Posterior vena cava (tissue), 2 donors: ENCODE measurements at regions of chr17 and their contacts with region 1.

Region 1: DNA sequence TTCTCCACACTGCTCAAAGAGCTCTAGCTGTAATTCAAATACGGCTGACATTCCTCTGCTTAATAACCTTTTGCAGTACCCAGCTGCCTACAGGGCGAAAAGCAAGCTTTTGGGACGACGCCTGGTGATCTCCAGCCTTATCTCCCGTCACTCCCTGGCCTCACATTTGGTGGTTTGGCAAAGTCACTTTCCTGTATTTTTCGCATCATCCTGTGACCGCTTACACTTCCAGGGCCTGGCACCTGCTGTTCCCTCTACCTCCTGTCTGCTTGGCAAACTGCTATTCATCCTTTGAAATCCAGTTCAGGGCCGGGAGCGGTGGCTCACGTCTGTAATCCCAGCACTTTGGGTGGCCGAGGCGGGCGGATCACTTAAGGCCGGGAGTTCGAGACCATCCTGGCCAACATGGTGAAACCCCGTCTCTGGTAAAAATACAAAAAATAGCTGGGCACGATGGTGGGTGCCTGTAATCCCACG is 2.7 kb upstream of the BHLHA9 start:
- DNase-seq: peak; percentile 83

Region 2: GRCh38 chr17:1078831-1079561 is 188.5 kb before region 1 on chr17:
- intact Hi-C with region 1: no loop called
- DNase-seq: no peak

Region 3: DNA sequence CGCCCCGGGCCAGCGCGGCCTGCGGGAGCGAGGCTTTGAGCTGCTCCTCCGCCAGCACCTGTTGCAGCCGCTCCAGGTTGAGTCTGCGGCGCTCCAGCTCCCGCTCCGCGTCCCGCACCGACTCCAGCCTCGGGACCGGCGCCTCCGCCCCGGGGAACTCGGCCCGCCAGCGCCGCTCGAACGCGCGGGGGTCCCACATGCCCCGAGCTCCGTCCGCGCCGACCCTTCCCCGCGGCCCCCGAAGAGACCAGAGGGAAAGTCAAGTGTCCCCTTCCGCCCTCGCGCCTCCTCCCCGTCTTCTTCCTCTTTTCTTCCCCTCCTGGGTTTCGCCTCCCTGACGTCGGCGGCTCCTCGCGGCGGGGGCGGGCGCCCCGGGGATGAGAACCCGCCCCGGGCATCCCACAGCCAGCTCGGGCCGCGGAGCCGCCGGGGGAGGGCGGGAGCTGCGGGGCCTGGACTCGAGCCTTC is 38.0 kb before region 1 on chr17:
- intact Hi-C with region 1: loop called in 1 of 2 experiments (anchors 1 kb)
- DNase-seq: peak; percentile 93

Region 4: DNA sequence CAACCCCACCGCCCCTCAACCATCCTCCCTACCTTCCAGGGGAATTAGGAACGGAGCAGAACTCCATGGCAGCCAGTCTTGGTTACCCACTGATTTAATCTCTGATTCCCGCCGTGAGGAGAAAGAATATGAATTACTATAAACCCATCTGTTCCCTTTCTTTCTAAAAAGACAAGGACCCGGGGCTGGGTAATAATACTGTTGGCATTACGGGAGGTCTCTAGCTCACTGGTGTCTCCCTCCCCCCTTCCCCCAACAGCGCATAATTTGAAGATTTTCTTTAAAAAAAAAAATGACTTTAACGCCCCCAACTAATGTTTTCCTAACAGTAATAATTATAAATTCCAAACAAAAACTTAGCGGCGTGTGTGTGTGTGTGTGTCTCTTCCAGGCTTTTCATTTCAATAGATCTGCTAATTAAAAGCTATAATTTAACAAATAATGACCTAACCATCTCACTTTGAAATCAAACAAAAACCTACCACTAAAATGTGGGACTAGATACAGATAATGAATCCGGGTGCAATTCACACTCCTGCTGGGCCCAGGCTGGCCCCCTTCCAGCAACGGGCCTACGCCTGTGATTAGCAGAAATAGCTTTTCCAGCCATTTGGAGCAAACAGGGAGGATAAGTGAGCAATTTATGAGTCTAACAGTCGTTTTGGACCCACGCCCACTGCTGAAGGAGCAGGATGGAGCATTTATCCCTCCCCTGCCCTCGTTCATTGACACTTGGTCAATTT is 15.5 kb before region 1 on chr17:
- intact Hi-C with region 1: no loop called
- DNase-seq: no peak